Activated naive CD8-positive, alpha-beta T cell treated with anti-CD3 and anti-CD28 coated beads, Interleukin-2, amount 10 ng/mL, durations not matched to agents 7 days and 5 days (primary cell): ENCODE measurements at regions of chr17 and their contacts with region 1.

Region 1: DNA sequence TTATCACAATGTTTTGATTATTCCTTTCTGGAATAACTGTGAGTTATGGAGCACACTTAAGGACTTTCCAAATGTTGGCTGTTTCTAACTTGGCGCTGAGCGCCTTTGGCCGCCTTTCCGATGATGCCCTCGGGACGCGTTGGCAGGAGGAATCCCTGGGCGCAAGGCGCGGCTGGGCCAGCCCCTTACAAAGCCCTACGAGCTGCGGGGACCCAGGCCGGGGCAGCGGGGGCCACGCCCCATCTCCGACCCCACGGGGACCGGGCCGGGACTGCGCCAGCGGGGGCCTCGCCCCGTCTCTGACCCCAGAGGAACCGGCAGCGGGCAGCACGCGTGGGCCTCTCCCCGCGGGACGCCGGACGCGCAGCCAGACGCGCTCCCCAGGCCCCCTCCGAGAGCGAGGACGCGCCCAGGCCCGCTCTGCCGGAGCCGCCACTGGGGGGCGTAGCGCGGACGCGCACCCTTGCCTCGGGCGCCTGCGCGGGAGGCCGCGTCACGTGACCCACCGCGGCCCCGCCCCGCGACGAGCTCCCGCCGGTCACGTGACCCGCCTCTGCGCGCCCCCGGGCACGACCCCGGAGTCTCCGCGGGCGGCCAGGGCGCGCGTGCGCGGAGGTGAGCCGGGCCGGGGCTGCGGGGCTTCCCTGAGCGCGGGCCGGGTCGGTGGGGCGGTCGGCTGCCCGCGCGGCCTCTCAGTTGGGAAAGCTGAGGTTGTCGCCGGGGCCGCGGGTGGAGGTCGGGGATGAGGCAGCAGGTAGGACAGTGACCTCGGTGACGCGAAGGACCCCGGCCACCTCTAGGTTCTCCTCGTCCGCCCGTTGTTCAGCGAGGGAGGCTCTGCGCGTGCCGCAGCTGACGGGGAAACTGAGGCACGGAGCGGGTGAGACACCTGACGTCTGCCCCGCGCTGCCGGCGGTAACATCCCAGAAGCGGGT is at the start of gene GAA:
- DNase-seq: peak; percentile 99
- ATAC-seq: peak; percentile 88
- H3K4me3 Mint-ChIP-seq: peak within 1 kb of the TSS; percentile 87
- H3K27ac Mint-ChIP-seq: peak within 1 kb of the TSS; percentile 82
- H3K4me1 Mint-ChIP-seq: peaks cover 20% of the 10 kb centered on the region
- H3K27me3 Mint-ChIP-seq: peaks cover 1% of the 10 kb centered on the region
- total RNA-seq, gene GAA: 41.9 to 48.9 TPM

Region 2: GRCh38 chr17:80141463-80142165 is 40.3 kb after region 1 on chr17:
- POLR2A ChIA-PET with region 1: interaction called, 18 read pairs
- DNase-seq: peak; percentile 21
- ATAC-seq: no peak
- H3K4me3 Mint-ChIP-seq: no peak overlapping the region
- H3K27ac Mint-ChIP-seq: peak overlapping the region; percentile 42
- H3K4me1 Mint-ChIP-seq: peaks cover 19% of the 10 kb centered on the region
- H3K27me3 Mint-ChIP-seq: no peaks in the 10 kb centered on the region

Region 3: GRCh38 chr17:80147035-80147836 is 46.0 kb after region 1 on chr17 and contains the start of gene EIF4A3:
- POLR2A ChIA-PET with region 1: interaction called, 18 read pairs
- DNase-seq: peak; percentile 97
- ATAC-seq: peak; percentile 84
- H3K4me3 Mint-ChIP-seq: peak within 1 kb of the TSS; percentile 97
- H3K27ac Mint-ChIP-seq: peak within 1 kb of the TSS; percentile 97
- H3K4me1 Mint-ChIP-seq: peaks cover 30% of the 10 kb centered on the region
- H3K27me3 Mint-ChIP-seq: no peaks in the 10 kb centered on the region
- total RNA-seq, gene EIF4A3: 106 to 115 TPM

Region 4: GRCh38 chr17:80160536-80160935 is 59.3 kb after region 1 on chr17:
- POLR2A ChIA-PET with region 1: no interaction called
- DNase-seq: no peak
- ATAC-seq: no peak
- H3K4me3 Mint-ChIP-seq: no peak overlapping the region
- H3K27ac Mint-ChIP-seq: no peak overlapping the region
- H3K4me1 Mint-ChIP-seq: peaks cover 2% of the 10 kb centered on the region
- H3K27me3 Mint-ChIP-seq: peaks cover 37% of the 10 kb centered on the region